Caco-2 (cell line): ENCODE measurements at regions of chr1 and their contacts with region 1.

Region 1: DNA sequence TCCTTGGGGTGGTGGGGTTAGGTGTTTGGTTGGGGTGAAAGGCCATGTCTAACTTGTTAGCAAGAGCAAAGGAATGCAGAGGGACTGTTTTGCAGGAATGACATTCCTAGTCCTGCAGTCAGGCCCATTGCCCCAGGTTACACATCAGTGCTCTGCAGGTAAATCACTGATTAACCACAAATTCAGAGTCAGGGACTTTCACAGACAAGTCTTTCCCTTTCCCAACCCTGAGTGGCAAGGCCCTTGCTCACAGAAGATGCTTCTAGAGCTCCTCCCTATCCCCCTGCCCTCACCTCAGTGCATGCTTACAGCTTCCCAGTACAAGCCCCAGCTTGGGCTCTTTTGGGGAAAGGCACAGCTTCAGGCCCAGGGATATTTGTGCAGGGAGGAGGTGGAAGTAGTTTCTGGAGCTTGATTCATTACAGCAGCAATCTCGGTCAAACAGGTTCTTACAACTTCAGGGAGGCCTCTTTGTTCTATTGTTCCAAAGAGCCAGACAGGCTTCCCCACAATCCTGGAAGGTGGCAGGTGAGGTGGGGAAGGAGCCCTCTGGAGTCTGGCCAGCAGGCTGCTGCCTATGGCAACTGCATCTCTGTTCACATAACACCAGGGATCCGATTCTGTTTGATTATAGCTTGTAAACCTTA is 53.9 kb downstream of the CASQ2 start:
- DNase-seq: peak; percentile 90 to 91
- H3K4me3 ChIP-seq: no peak overlapping the region
- H3K4me3 Mint-ChIP-seq: peak overlapping the region; percentile 53
- H3K27ac Mint-ChIP-seq: peak overlapping the region; percentile 91
- H3K4me1 ChIP-seq: peaks cover 58% of the 10 kb centered on the region
- H3K4me1 Mint-ChIP-seq: peaks cover 35% of the 10 kb centered on the region
- H3K27me3 ChIP-seq: no peaks in the 10 kb centered on the region
- H3K27me3 Mint-ChIP-seq: no peaks in the 10 kb centered on the region
- CTCF ChIP-seq: no peak

Region 2: GRCh38 chr1:115642168-115643072 is 72.2 kb before region 1 on chr1:
- CTCF ChIA-PET with region 1: no interaction called
- POLR2A ChIA-PET with region 1: no interaction called
- intact Hi-C with region 1: loop called (anchors 1 kb)
- DNase-seq: peak; percentile 64 to 66
- H3K4me3 ChIP-seq: peak overlapping the region; percentile 78
- H3K4me3 Mint-ChIP-seq: peak overlapping the region; percentile 92
- H3K27ac Mint-ChIP-seq: peak overlapping the region; percentile 76
- H3K4me1 ChIP-seq: peaks cover 20% of the 10 kb centered on the region
- H3K4me1 Mint-ChIP-seq: peaks cover 4% of the 10 kb centered on the region
- H3K27me3 ChIP-seq: no peaks in the 10 kb centered on the region
- H3K27me3 Mint-ChIP-seq: no peaks in the 10 kb centered on the region
- CTCF ChIP-seq: peak in 1 of 2 experiments; percentile 30

Region 3: GRCh38 chr1:115764541-115764940 is 49.9 kb after region 1 on chr1:
- CTCF ChIA-PET with region 1: interaction called, 18 read pairs
- POLR2A ChIA-PET with region 1: interaction called, 4 read pairs
- intact Hi-C with region 1: loop called (anchors 2 kb)
- DNase-seq: peak; percentile 47 to 57
- H3K4me3 ChIP-seq: no peak overlapping the region
- H3K4me3 Mint-ChIP-seq: no peak overlapping the region
- H3K27ac Mint-ChIP-seq: no peak overlapping the region
- H3K4me1 ChIP-seq: no peaks in the 10 kb centered on the region
- H3K4me1 Mint-ChIP-seq: peaks cover 11% of the 10 kb centered on the region
- H3K27me3 ChIP-seq: no peaks in the 10 kb centered on the region
- H3K27me3 Mint-ChIP-seq: no peaks in the 10 kb centered on the region
- CTCF ChIP-seq: peak; percentile 46 to 50